SK-N-SH (cell line): ENCODE measurements at regions of chr21 and their contacts with region 1.

Region 1: DNA sequence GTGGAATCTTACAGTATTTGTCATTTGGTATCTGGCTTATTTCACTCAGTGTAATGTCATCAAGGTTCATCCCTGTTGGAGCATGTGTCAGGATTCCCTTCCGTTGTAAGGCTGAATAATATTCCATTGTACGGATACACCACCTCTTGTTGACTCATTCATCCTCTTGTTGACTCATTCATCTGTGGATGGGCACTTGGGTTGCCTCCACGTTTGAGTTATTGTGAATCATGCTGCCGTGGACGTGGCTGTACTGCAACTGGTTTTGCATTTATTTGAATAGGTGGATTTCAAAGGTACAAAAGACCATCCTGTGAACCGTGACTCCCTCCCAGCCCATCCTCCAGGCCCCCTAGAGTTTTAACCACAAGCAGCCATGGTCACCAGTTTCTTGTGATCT is 11.9 kb upstream of the TCP10L start:
- DNase-seq: no peak
- H3K4me3 ChIP-seq: no peak overlapping the region
- H3K27ac ChIP-seq: peak overlapping the region in 1 of 2 experiments; percentile 97; a peak in 2 of 4 replicates
- H3K4me1 ChIP-seq: peaks cover 0 to 3% of the 10 kb centered on the region in 2 experiments; a peak in 1 of 4 replicates
- H3K27me3 ChIP-seq: no peaks in the 10 kb centered on the region
- CTCF ChIP-seq: no peak
- EP300 ChIP-seq: peak in 1 of 2 experiments; percentile 94; a peak in 2 of 4 replicates
- RAD21 ChIP-seq: no peak

Region 2: DNA sequence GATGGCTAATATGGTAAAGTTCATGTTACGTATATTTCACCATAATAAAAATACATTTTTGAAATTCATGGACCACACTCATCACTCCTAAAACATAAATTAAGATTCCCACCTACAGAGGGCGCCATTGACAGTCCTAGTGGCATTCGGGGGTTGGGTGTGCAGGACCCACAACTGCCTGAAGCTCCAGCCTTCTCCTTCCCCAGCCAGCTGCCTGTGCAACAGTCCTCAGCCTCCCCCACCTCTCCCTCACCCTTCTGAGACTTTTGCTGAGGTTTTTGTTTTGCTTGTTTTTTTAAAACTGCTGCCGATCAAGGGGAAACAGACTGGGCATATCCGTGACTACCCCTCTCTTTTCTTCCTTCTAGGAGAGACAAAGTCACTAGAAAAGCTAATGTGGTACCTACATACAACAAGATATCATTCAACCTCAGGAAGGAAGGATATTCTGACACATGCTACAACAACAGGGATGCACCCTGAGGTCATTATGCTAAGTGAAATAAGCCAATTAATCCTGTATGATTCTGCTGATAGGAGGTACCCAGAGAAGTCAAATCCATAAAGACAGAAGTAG is 193.9 kb before region 1 on chr21:
- CTCF ChIA-PET with region 1: interaction called, 151 read pairs
- POLR2A ChIA-PET with region 1: interaction called, 8 read pairs
- DNase-seq: peak; percentile 81
- H3K4me3 ChIP-seq: no peak overlapping the region
- H3K27ac ChIP-seq: no peak overlapping the region
- H3K4me1 ChIP-seq: no peaks in the 10 kb centered on the region; a peak in 1 of 4 replicates
- H3K27me3 ChIP-seq: no peaks in the 10 kb centered on the region
- CTCF ChIP-seq: peak; percentile 79
- EP300 ChIP-seq: no peak
- RAD21 ChIP-seq: peak; percentile 82

Region 3: DNA sequence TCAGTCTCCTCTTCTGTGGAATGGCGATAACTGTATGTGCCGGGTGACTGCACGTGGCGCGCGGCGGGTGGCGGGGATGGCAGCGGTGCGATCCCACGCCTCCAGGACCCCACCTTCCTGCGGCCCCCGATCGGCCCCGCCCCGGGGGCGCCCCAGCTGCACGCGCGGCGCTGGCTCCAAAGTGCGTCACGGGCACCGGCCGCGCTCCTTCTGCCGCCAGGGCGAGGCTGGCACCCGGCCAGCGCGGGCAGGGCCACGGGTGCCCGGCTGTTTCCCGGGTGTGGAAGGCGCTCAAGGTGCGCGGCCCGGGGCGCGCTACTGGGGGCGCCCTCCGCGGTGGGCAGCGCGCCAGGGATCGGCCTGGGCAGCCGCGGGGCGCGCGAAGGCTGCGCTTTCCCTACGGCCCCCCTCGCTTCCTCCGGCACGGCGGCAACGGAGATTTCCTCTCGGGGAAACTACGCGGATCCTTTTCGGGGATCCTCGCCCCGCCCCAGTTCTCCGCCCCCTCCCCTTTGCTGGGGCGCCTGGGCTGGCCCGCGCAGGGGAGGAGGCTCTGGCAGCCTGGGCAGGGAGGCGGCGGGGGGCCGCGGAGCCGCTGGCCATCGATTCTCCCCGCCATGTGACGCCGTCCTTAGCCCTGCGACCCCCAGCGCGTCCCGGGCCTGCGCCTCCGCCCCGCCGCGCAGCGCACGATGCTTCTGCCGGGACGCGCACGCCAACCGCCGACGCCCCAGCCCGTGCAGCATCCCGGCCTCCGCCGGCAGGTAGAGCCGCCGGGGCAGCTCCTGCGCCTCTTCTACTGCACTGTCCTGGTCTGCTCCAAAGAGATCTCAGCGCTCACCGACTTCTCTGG is 184.8 kb before region 1 on chr21 and contains the start of gene EVA1C:
- CTCF ChIA-PET with region 1: interaction called, 151 read pairs
- POLR2A ChIA-PET with region 1: no interaction called
- DNase-seq: peak; percentile 82
- H3K4me3 ChIP-seq: peak within 1 kb of the TSS; percentile 63 to 72
- H3K27ac ChIP-seq: peak within 1 kb of the TSS in 1 of 2 experiments; percentile 81; a peak in 2 of 4 replicates
- H3K4me1 ChIP-seq: peaks cover 13% of the 10 kb centered on the region in 2 experiments; a peak in 3 of 4 replicates
- H3K27me3 ChIP-seq: no peaks in the 10 kb centered on the region
- CTCF ChIP-seq: no peak; the same call in 1 of the 2 replicates
- EP300 ChIP-seq: no peak
- RAD21 ChIP-seq: no peak
- polyA plus RNA-seq, gene EVA1C: 9.5 and 10.1 TPM in 2 replicates

Region 4: GRCh38 chr21:32612075-32612998 is 15.1 kb after region 1 on chr21 and contains the start of gene CFAP298:
- CTCF ChIA-PET with region 1: interaction called, 28 read pairs
- POLR2A ChIA-PET with region 1: interaction called, 5 read pairs
- DNase-seq: peak; percentile 90
- H3K4me3 ChIP-seq: peak within 1 kb of the TSS; percentile 90 to 98
- H3K27ac ChIP-seq: peak within 1 kb of the TSS; percentile 98 to 100
- H3K4me1 ChIP-seq: peaks cover 3 to 8% of the 10 kb centered on the region in 2 experiments; a peak in 3 of 4 replicates
- H3K27me3 ChIP-seq: no peaks in the 10 kb centered on the region
- CTCF ChIP-seq: no peak
- EP300 ChIP-seq: no peak; a peak in 1 of 4 replicates
- RAD21 ChIP-seq: no peak
- polyA plus RNA-seq, gene CFAP298: 57.8 and 59.1 TPM in 2 replicates

Region 5: GRCh38 chr21:32702702-32703101 is 105.5 kb after region 1 on chr21:
- CTCF ChIA-PET with region 1: no interaction called
- POLR2A ChIA-PET with region 1: no interaction called
- DNase-seq: no peak
- H3K4me3 ChIP-seq: no peak overlapping the region
- H3K27ac ChIP-seq: peak overlapping the region; percentile 44 to 48; a peak in 3 of 4 replicates
- H3K4me1 ChIP-seq: peaks cover 6 to 13% of the 10 kb centered on the region in 2 experiments; a peak in 3 of 4 replicates
- H3K27me3 ChIP-seq: no peaks in the 10 kb centered on the region
- CTCF ChIP-seq: no peak
- EP300 ChIP-seq: no peak
- RAD21 ChIP-seq: no peak

Region 6: GRCh38 chr21:33212159-33212851 is 615.1 kb after region 1 on chr21:
- CTCF ChIA-PET with region 1: no interaction called
- POLR2A ChIA-PET with region 1: no interaction called
- DNase-seq: no peak
- H3K4me3 ChIP-seq: no peak overlapping the region
- H3K27ac ChIP-seq: no peak overlapping the region
- H3K4me1 ChIP-seq: no peaks in the 10 kb centered on the region; a peak in 1 of 4 replicates
- H3K27me3 ChIP-seq: peaks cover 8% of the 10 kb centered on the region; the same call in 1 of the 2 replicates
- CTCF ChIP-seq: no peak
- EP300 ChIP-seq: no peak
- RAD21 ChIP-seq: no peak